ENCODE measurements at regions of chr6 and their contacts with region 1.

Region 1: GRCh38 chr6:127737009-127737486 is 160.1 kb downstream of the C6orf58 start:
- DNase-seq: peak; percentile 11
- H3K4me3 Mint-ChIP-seq: no peak overlapping the region
- H3K27ac Mint-ChIP-seq: no peak overlapping the region
- H3K4me1 Mint-ChIP-seq: no peaks in the 10 kb centered on the region
- H3K27me3 Mint-ChIP-seq: no peaks in the 10 kb centered on the region

Region 2: DNA sequence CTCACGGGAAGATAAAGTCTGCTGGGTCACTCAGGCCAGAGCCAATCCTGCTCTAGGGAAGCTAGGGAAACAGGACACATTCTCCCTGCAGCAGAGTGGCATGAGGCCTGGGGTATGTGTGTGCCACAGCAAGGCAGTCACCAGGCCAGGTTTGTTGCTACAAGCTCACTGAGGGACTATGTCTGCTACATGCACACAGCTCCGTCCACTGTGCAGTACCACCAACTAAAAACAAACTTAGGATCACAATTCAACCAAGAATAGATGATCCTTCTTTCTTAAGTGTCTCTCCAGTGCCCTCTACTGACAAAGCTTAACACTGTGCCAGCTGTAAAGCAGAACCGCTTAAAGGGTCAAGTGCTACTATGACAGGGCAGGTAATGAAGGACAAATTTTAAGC is 590.8 kb after region 1 on chr6:
- intact Hi-C with region 1: loop called (anchors 1 kb)
- DNase-seq: peak; percentile 9
- H3K4me3 Mint-ChIP-seq: no peak overlapping the region
- H3K27ac Mint-ChIP-seq: no peak overlapping the region
- H3K4me1 Mint-ChIP-seq: no peaks in the 10 kb centered on the region
- H3K27me3 Mint-ChIP-seq: peaks cover 2% of the 10 kb centered on the region

Region 3: DNA sequence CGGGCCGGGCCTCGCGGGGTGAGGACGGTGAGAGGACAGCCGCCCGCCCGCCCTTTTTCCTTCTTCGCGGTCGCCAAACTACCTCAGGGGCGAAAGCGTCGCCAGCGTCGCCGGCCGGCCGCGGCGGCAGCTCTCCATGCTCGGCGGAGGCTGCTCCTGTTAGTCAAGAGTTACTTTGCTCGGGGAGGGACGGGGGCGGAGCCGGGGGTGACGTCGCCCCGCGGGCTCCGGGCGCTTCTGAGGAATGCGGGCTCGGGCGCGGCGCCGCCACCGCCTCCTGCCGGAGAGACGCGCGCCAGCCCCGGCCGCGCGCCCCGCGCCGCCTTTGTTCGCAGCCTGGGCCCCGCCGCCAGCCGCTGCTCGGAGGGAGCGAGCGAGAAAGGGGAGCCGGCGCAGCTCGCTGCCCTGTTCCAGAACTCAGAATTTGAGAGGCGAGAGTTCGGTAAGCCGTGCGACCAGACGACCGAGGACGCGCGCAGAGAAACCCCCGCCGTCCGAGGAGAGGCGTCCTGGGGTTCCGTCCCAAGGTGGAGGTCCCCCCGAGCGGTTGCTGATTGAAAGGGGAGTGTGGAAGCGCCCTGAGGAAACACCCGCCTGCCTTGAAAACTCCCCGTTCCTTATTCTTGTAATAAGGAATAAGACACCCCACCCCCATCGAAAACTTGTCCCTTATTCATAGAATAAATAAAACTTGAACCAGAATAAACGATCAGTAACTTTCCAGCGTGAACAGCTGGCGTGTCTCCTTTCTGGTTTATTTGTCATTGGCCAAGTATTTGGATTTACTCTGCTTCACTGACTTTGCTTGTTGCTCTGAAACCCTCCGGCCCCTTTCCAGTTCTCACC is 783.6 kb after region 1 on chr6 and contains the start of gene PTPRK:
- intact Hi-C with region 1: loop called (anchors 1 kb)
- DNase-seq: peak; percentile 80
- H3K4me3 Mint-ChIP-seq: peak within 1 kb of the TSS; percentile 90
- H3K27ac Mint-ChIP-seq: peak within 1 kb of the TSS; percentile 74
- H3K4me1 Mint-ChIP-seq: peaks cover 11% of the 10 kb centered on the region
- H3K27me3 Mint-ChIP-seq: peaks cover 74% of the 10 kb centered on the region
- total RNA-seq, gene PTPRK: 4.2 and 6.1 TPM in 2 replicates

Region 4: GRCh38 chr6:128731249-128732165 is 994.5 kb after region 1 on chr6:
- intact Hi-C with region 1: loop called (anchors 2 kb)
- DNase-seq: no peak
- H3K4me3 Mint-ChIP-seq: no peak overlapping the region
- H3K27ac Mint-ChIP-seq: no peak overlapping the region
- H3K4me1 Mint-ChIP-seq: no peaks in the 10 kb centered on the region
- H3K27me3 Mint-ChIP-seq: peaks cover 16% of the 10 kb centered on the region

Region 5: DNA sequence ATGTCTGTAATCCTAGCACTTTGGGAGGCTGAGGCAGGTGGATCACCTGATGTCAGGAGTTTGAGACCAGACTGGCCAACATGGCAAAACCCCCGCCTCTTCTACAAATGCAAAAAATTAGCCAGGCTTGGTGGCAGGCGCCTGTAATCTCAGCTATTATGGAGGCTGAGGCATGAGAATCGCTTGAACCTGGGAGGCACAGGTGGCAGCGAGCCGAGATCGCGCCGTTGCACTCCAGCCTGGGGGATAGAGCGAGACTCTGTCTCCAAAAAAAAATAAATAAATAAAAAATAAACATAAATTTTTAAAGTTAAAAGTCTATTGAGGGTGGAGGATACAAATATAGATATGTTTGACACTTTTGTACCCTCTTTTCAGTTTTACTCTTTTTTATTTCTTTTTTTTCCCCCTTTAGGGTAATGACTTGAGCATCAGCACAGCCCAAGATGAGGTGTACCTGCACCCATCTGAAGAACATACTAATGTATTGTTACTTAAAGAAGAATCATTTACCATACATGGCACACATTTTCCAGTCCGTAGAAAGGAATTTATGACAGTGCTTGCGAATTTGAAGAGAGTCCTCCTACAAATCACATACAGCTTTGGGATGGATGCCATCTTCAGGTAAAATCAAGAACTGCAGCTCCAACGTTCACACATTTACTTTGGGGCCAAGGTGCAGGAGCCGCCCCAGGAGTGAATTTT is 1514.8 kb after region 1 on chr6:
- intact Hi-C with region 1: loop called (anchors 5 kb)
- DNase-seq: peak; percentile 28
- H3K4me3 Mint-ChIP-seq: no peak overlapping the region
- H3K27ac Mint-ChIP-seq: no peak overlapping the region
- H3K4me1 Mint-ChIP-seq: peaks cover 6% of the 10 kb centered on the region
- H3K27me3 Mint-ChIP-seq: peaks cover 25% of the 10 kb centered on the region

Measured in activated T-helper 2 cell treated with anti-CD3 and anti-CD28 coated beads, Interferon-gamma antibody, Interleukin-2, Interleukin-4, amounts not matched to agents 10 μg/mL and 5 μg/mL and 100 μg/mL, durations not matched to agents 14 hours and 24 hours and 36 hours (primary cell).